PC-9 (cell line): ENCODE measurements at regions of chr3 and their contacts with region 1.

Region 1: GRCh38 chr3:125212509-125213244 is at the start of gene SLC12A8:
- DNase-seq: peak in 1 of 2 experiments; percentile 43
- H3K4me3 ChIP-seq: peak within 1 kb of the TSS; percentile 68
- H3K27ac ChIP-seq: no peak within 1 kb of the TSS
- H3K4me1 ChIP-seq: 0 out of 2 replicates have a peak, but pooled peaks cover 17% of the 10 kb centered on the region
- H3K27me3 ChIP-seq: no peaks in the 10 kb centered on the region
- CTCF ChIP-seq: no peak
- total RNA-seq, gene SLC12A8: 30.7 and 42.9 TPM in 2 replicates

Region 2: DNA sequence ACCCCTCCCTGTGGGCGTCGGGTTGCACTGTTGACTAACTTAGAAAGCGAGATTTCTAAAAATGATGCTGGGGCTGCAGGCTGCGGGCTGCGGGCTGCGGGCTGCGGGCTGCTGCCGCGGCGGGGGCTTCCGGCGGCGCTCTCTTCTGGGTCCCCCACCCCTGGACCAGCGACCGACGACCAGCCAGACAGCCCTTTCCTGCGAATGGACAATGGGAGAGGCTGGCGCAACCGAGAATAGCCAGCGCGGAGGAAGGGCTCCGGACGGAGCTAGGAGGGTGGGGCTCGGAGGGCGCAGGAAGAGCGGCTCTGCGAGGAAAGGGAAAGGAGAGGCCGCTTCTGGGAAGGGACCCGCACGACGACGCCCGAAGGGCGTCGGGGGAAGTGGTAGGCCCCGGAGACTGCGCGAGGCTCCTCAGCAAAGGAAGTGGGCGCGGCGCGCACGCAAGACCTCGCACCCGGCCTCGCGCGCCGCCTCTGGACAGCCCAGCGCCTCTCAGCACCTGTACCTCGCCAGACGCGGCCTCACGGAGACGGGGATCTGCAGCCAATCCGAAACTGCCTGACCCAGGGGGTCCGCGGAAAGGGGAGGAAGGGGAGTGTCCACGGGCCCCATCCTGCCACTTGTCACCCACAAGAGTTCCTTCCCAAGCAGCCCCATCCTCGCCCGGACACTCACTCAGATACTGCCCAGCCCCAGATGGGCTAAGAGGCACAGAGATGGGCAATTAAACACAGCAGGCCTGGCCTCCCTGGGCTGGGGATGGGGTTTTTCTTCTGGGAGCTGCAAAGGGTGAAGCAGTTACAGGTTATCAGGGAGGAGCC is 70.9 kb before region 1 on chr3:
- CTCF ChIA-PET with region 1: no interaction called
- POLR2A ChIA-PET with region 1: no interaction called
- intact Hi-C with region 1: loop called (anchors 5 kb)
- DNase-seq: no peak
- H3K4me3 ChIP-seq: no peak overlapping the region
- H3K27ac ChIP-seq: no peak overlapping the region
- H3K4me1 ChIP-seq: peaks cover 12% of the 10 kb centered on the region
- H3K27me3 ChIP-seq: no peaks in the 10 kb centered on the region
- CTCF ChIP-seq: no peak

Region 3: DNA sequence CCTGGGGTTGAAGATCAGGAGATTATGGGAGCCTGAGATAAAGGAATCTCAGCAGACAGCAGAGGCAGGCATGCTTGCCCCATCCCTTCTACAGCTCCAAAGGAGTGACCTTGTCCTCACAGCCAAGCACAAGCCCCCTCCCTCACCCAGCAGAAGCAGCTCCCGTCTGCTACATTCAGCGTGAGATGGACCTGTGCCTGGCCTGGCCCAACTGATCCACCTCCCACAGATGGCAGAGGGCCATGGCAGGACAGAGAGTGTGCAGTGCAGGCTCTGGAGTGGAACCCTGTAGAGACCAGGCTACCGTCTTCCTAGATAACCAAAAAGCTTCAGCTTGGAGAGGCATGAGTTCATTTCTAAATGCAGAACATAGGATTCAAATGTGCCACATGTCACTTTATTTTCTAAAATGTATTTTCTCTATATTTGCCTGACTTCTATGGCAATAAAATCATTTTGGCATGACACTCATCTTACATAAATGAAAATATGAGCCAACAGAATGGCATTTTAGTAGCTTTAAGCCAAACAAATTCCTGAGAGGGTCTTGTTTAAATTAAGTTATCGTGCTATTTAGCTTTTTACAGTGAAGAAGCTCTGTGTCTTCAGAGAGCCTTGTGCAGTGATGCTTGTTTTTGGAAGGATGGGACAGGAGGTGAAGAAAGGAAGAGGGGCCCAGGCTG is 43.8 kb before region 1 on chr3:
- CTCF ChIA-PET with region 1: no interaction called
- POLR2A ChIA-PET with region 1: no interaction called
- intact Hi-C with region 1: no loop called
- DNase-seq: no peak
- H3K4me3 ChIP-seq: no peak overlapping the region
- H3K27ac ChIP-seq: no peak overlapping the region
- H3K4me1 ChIP-seq: peaks cover 12% of the 10 kb centered on the region
- H3K27me3 ChIP-seq: no peaks in the 10 kb centered on the region
- CTCF ChIP-seq: no peak

Region 4: GRCh38 chr3:125437631-125438435 is 225.2 kb after region 1 on chr3:
- CTCF ChIA-PET with region 1: interaction called, 3 read pairs
- POLR2A ChIA-PET with region 1: no interaction called
- intact Hi-C with region 1: loop called (anchors 5 kb)
- DNase-seq: peak in 1 of 2 experiments; percentile 51
- H3K4me3 ChIP-seq: no peak overlapping the region
- H3K27ac ChIP-seq: no peak overlapping the region
- H3K4me1 ChIP-seq: peaks cover 8% of the 10 kb centered on the region
- H3K27me3 ChIP-seq: no peaks in the 10 kb centered on the region
- CTCF ChIP-seq: peak; percentile 99

Region 5: GRCh38 chr3:126170073-126170777 is 957.5 kb after region 1 on chr3:
- CTCF ChIA-PET with region 1: no interaction called
- POLR2A ChIA-PET with region 1: no interaction called
- intact Hi-C with region 1: no loop called
- DNase-seq: no peak
- H3K4me3 ChIP-seq: no peak overlapping the region
- H3K27ac ChIP-seq: no peak overlapping the region
- H3K4me1 ChIP-seq: peaks cover 18% of the 10 kb centered on the region; the same call in 1 of the 2 replicates
- H3K27me3 ChIP-seq: no peaks in the 10 kb centered on the region
- CTCF ChIP-seq: no peak